ENCODE measurements at regions of chr17 and their contacts with region 1.

Region 1: GRCh38 chr17:49162866-49163265 is 30.3 kb downstream of the B4GALNT2 start:
- DNase-seq: no peak
- H3K4me3 ChIP-seq: no peak overlapping the region
- CTCF ChIP-seq: no peak

Region 2: GRCh38 chr17:49031965-49032928 is 130.6 kb before region 1 on chr17:
- in situ Hi-C with region 1: no loop called
- DNase-seq: peak; percentile 79
- H3K4me3 ChIP-seq: no peak overlapping the region
- CTCF ChIP-seq: peak; percentile 79

Region 3: DNA sequence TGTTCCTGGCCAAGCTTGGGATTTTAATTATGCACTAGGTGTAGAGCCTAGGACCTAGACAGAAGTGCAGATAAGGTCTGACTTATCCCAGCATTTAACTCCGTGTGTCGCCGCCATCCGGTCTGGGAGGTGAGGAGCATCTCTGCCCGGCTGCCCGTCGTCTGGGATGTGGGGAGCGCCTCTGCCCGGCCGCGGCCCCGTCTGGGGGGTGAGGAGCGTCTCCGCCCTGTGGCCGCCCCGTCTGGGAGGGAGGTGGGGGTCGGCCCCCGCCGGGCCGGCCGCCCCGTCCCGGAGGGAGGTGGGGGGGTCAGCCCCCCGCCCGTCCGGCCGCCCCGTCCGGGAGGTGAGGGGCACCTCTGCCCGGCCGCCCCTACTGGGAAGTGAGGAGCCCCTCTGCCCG is 37.4 kb before region 1 on chr17:
- in situ Hi-C with region 1: loop called (anchors 5 kb)
- DNase-seq: no peak
- H3K4me3 ChIP-seq: no peak overlapping the region
- CTCF ChIP-seq: no peak